ENCODE measurements at regions of chr14 and their contacts with region 1.

Region 1: DNA sequence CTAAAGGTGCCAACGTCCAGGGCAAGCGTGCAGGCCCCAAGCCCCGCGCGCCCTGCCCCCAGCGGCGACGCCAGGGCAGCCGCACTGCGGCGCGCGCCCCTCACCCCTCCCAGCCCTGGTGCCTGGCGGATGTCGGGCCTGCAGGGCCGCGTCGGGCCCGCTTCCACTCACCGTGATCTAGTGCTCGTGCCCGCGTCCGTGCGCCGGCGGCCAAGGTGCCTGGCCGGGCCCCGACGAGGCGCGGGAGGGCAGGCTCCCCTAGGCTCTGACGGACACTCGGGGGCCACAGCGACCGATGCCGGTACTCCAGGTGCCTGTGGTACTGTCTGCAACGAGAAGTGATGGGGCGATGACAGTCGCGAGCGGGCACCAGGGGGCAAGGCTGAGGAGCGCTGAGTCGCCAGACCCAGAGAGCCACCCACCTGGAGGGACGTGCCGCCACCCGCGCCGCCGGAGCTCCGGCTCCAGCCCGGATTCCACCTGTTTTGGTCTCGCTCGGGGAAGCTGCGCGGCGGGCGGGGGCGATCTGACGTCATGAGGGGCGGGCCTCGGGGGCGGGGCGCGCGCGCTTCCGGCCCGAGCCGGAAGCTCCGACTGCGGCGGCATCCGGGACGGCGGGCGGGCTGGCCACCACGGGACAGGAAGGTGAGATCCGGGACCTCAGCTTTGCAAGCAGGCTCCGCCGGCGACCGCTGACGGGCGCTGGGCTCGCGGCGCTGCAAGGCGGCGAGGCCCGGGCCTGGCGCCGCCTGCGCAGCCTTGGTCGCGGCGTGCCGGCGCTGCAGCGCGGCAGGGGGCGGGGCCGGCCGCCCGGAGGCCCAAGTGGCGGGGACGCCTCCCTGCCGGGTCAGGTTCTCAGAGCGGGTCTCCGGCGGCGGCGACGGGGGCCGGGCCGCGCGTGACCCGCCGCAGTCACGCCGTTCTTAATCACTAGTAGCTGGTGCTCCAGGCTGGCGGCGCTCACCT is at the starts of genes LYSET and MOAP1:
- DNase-seq: peak; percentile 84 to 97 (median 92)
- ATAC-seq: peak; percentile 86
- H3K4me3 ChIP-seq: peak within 1 kb of the TSS; percentile 89 to 100
- H3K4me3 Mint-ChIP-seq: peak within 1 kb of the TSS; percentile 92
- H3K27ac ChIP-seq: peak within 1 kb of the TSS; percentile 97 to 100
- H3K27ac Mint-ChIP-seq: peak within 1 kb of the TSS; percentile 95
- H3K4me1 ChIP-seq: peaks cover 34% of the 10 kb centered on the region
- H3K4me1 Mint-ChIP-seq: peaks cover 45% of the 10 kb centered on the region
- H3K27me3 ChIP-seq: no peaks in the 10 kb centered on the region
- H3K27me3 Mint-ChIP-seq: no peaks in the 10 kb centered on the region
- CTCF ChIP-seq: peak; percentile 49
- total RNA-seq, gene LYSET: 2.4 to 5.1 TPM
- total RNA-seq, gene MOAP1: 114 to 122 TPM

Region 2: GRCh38 chr14:92039719-92040430 is 1144.8 kb before region 1 on chr14 and contains the start of gene TRIP11:
- CTCF ChIA-PET with region 1: no interaction called
- POLR2A ChIA-PET with region 1: no interaction called
- intact Hi-C with region 1: loop called in 1 of 2 experiments (anchors 10 kb)
- DNase-seq: peak; percentile 93 to 97 (median 95)
- ATAC-seq: peak; percentile 86
- H3K4me3 ChIP-seq: peak within 1 kb of the TSS; percentile 86 to 93
- H3K4me3 Mint-ChIP-seq: peak within 1 kb of the TSS; percentile 95
- H3K27ac ChIP-seq: peak within 1 kb of the TSS; percentile 94 to 96
- H3K27ac Mint-ChIP-seq: peak within 1 kb of the TSS; percentile 100
- H3K4me1 ChIP-seq: peaks cover 34% of the 10 kb centered on the region
- H3K4me1 Mint-ChIP-seq: peaks cover 51% of the 10 kb centered on the region
- H3K27me3 ChIP-seq: no peaks in the 10 kb centered on the region
- H3K27me3 Mint-ChIP-seq: no peaks in the 10 kb centered on the region
- CTCF ChIP-seq: no peak
- total RNA-seq, gene TRIP11: 25.3 to 26.5 TPM

Region 3: GRCh38 chr14:92540472-92541053 is 644.1 kb before region 1 on chr14:
- CTCF ChIA-PET with region 1: no interaction called
- POLR2A ChIA-PET with region 1: no interaction called
- intact Hi-C with region 1: no loop called
- DNase-seq: peak in 1 of 9 experiments; percentile 33
- ATAC-seq: no peak
- H3K4me3 ChIP-seq: no peak overlapping the region
- H3K4me3 Mint-ChIP-seq: peak overlapping the region; percentile 42
- H3K27ac ChIP-seq: peak overlapping the region in 1 of 2 experiments; percentile 72
- H3K27ac Mint-ChIP-seq: peak overlapping the region; percentile 62
- H3K4me1 ChIP-seq: peaks cover 53% of the 10 kb centered on the region
- H3K4me1 Mint-ChIP-seq: peaks cover 75% of the 10 kb centered on the region
- H3K27me3 ChIP-seq: no peaks in the 10 kb centered on the region
- H3K27me3 Mint-ChIP-seq: no peaks in the 10 kb centered on the region
- CTCF ChIP-seq: no peak

Region 4: GRCh38 chr14:92951912-92952471 is 232.7 kb before region 1 on chr14:
- CTCF ChIA-PET with region 1: interaction called, 28 read pairs
- POLR2A ChIA-PET with region 1: interaction called, 4 read pairs
- intact Hi-C with region 1: no loop called
- DNase-seq: peak; percentile 69 to 92 (median 82)
- ATAC-seq: peak; percentile 98
- H3K4me3 ChIP-seq: no peak overlapping the region
- H3K4me3 Mint-ChIP-seq: no peak overlapping the region
- H3K27ac ChIP-seq: no peak overlapping the region
- H3K27ac Mint-ChIP-seq: no peak overlapping the region
- H3K4me1 ChIP-seq: no peaks in the 10 kb centered on the region
- H3K4me1 Mint-ChIP-seq: peaks cover 4% of the 10 kb centered on the region
- H3K27me3 ChIP-seq: no peaks in the 10 kb centered on the region
- H3K27me3 Mint-ChIP-seq: no peaks in the 10 kb centered on the region
- CTCF ChIP-seq: peak; percentile 93

Region 5: GRCh38 chr14:93137864-93138263 is 46.8 kb before region 1 on chr14:
- CTCF ChIA-PET with region 1: no interaction called
- POLR2A ChIA-PET with region 1: interaction called, 3 read pairs
- intact Hi-C with region 1: loop called in 1 of 2 experiments (anchors 2 kb)
- DNase-seq: no peak
- ATAC-seq: no peak
- H3K4me3 ChIP-seq: no peak overlapping the region
- H3K4me3 Mint-ChIP-seq: no peak overlapping the region
- H3K27ac ChIP-seq: no peak overlapping the region
- H3K27ac Mint-ChIP-seq: no peak overlapping the region
- H3K4me1 ChIP-seq: no peaks in the 10 kb centered on the region
- H3K4me1 Mint-ChIP-seq: peaks cover 2% of the 10 kb centered on the region
- H3K27me3 ChIP-seq: no peaks in the 10 kb centered on the region
- H3K27me3 Mint-ChIP-seq: no peaks in the 10 kb centered on the region
- CTCF ChIP-seq: no peak

Region 6: GRCh38 chr14:93206793-93207467 is 22.3 kb after region 1 on chr14 and contains the starts of genes GON7 and UBR7:
- CTCF ChIA-PET with region 1: interaction called, 21 read pairs
- POLR2A ChIA-PET with region 1: interaction called, 55 read pairs
- intact Hi-C with region 1: loop called (anchors 1 kb)
- DNase-seq: peak; percentile 65 to 96 (median 87)
- ATAC-seq: peak; percentile 96
- H3K4me3 ChIP-seq: peak within 1 kb of the TSS; percentile 96 to 99
- H3K4me3 Mint-ChIP-seq: peak within 1 kb of the TSS; percentile 95
- H3K27ac ChIP-seq: peak within 1 kb of the TSS; percentile 79 to 82
- H3K27ac Mint-ChIP-seq: peak within 1 kb of the TSS; percentile 90
- H3K4me1 ChIP-seq: peaks cover 33% of the 10 kb centered on the region
- H3K4me1 Mint-ChIP-seq: peaks cover 46% of the 10 kb centered on the region
- H3K27me3 ChIP-seq: no peaks in the 10 kb centered on the region
- H3K27me3 Mint-ChIP-seq: no peaks in the 10 kb centered on the region
- CTCF ChIP-seq: no peak
- total RNA-seq, gene GON7: 1.4 to 2.4 TPM
- total RNA-seq, gene UBR7: 6.7 to 7.0 TPM

Region 7: DNA sequence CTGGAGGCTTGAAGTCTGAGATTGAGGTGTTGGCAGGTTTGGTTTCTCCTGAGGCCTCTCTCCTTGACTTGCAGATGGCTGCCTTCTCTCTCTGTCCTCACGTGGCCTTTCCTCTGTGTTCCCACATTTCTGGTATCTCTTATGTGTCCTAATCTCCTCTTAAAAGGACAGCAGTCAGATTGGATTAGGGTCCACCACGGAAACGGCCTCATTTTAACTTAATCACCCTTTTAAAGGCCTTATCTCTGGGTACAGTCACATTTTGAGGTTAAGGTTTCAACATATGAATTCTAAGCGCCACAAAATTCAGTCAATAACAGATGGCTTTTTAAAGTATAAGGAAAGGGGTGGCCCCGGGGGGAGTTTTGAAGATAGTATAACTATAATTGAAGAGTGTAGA is 279.6 kb after region 1 on chr14:
- CTCF ChIA-PET with region 1: no interaction called
- POLR2A ChIA-PET with region 1: no interaction called
- intact Hi-C with region 1: no loop called
- DNase-seq: no peak
- ATAC-seq: no peak
- H3K4me3 ChIP-seq: no peak overlapping the region
- H3K4me3 Mint-ChIP-seq: no peak overlapping the region
- H3K27ac ChIP-seq: no peak overlapping the region
- H3K27ac Mint-ChIP-seq: no peak overlapping the region
- H3K4me1 ChIP-seq: no peaks in the 10 kb centered on the region
- H3K4me1 Mint-ChIP-seq: no peaks in the 10 kb centered on the region
- H3K27me3 ChIP-seq: no peaks in the 10 kb centered on the region
- H3K27me3 Mint-ChIP-seq: peaks cover 2% of the 10 kb centered on the region
- CTCF ChIP-seq: no peak

Region 8: GRCh38 chr14:94173885-94174603 is 989.4 kb after region 1 on chr14 and contains the start of gene PPP4R4:
- CTCF ChIA-PET with region 1: no interaction called
- POLR2A ChIA-PET with region 1: interaction called, 3 read pairs
- intact Hi-C with region 1: loop called in 1 of 2 experiments (anchors 10 kb)
- DNase-seq: peak; percentile 66 to 93 (median 84)
- ATAC-seq: peak; percentile 89
- H3K4me3 ChIP-seq: peak within 1 kb of the TSS; percentile 62 to 77
- H3K4me3 Mint-ChIP-seq: peak within 1 kb of the TSS; percentile 84
- H3K27ac ChIP-seq: no peak within 1 kb of the TSS
- H3K27ac Mint-ChIP-seq: no peak within 1 kb of the TSS
- H3K4me1 ChIP-seq: peaks cover 12% of the 10 kb centered on the region
- H3K4me1 Mint-ChIP-seq: peaks cover 18% of the 10 kb centered on the region
- H3K27me3 ChIP-seq: peaks cover 0 to 8% of the 10 kb centered on the region in 2 experiments
- H3K27me3 Mint-ChIP-seq: peaks cover 16% of the 10 kb centered on the region
- CTCF ChIP-seq: no peak
- total RNA-seq, gene PPP4R4: not detected

Measured in CD8-positive, alpha-beta T cell (primary cell).